GM13977 (cell line): ENCODE measurements at regions of chr12 and their contacts with region 1.

Region 1: DNA sequence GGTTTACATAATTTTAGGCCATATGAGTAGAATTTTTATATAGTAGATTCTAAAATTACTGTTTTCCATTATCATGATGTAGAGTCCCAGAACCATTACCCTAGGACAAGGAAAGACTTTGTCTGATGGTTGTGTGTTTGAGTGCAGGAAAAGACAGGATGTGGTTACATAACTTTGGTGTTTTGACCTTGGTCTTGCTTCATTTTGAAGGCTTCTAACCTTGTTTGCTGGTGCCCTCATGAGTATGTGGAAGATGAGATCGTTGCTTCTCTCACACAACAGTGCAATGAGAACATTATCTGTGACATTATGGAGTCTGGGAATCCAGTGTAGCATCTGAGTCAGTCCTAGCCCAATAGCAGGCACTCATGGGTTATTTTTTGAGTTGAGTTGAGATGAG is 106.2 kb downstream of the IGF1 start:
- DNase-seq: no peak
- CTCF ChIP-seq: no peak

Region 2: GRCh38 chr12:101945369-101946231 is 428.6 kb before region 1 on chr12:
- in situ Hi-C with region 1: no loop called
- DNase-seq: no peak
- CTCF ChIP-seq: no peak

Region 3: DNA sequence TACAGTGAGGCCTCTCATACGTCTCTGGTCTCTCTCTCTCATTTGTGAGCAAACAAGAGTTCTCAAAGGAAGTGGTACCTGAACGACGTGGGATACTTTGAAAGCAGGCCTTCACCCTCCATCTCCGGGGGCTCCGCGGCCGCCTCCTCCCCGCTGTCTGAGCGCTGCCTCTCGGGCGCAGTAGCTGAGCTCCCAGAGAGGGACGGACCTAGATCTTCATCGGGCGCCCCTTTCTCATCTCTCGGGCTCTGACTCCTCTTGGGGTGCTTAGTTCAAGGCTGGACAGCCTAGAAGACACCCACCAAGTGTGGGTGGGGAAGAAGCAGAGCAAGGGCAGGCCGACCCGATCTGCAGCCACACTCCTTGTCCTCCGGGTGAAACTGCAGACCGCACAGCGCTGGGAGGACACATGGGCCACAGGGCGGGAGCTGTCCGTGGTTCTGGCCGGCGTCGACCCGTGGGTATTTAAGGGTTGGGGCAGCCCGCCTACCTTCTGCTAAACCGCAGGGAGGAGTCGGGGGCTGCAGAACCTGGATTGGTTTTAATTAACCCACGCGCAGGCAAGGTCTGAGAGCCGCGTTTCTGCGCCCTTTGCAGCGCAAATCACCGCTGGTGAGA is 450.1 kb after region 1 on chr12:
- in situ Hi-C with region 1: no loop called
- DNase-seq: peak; percentile 12
- CTCF ChIP-seq: no peak

Region 4: DNA sequence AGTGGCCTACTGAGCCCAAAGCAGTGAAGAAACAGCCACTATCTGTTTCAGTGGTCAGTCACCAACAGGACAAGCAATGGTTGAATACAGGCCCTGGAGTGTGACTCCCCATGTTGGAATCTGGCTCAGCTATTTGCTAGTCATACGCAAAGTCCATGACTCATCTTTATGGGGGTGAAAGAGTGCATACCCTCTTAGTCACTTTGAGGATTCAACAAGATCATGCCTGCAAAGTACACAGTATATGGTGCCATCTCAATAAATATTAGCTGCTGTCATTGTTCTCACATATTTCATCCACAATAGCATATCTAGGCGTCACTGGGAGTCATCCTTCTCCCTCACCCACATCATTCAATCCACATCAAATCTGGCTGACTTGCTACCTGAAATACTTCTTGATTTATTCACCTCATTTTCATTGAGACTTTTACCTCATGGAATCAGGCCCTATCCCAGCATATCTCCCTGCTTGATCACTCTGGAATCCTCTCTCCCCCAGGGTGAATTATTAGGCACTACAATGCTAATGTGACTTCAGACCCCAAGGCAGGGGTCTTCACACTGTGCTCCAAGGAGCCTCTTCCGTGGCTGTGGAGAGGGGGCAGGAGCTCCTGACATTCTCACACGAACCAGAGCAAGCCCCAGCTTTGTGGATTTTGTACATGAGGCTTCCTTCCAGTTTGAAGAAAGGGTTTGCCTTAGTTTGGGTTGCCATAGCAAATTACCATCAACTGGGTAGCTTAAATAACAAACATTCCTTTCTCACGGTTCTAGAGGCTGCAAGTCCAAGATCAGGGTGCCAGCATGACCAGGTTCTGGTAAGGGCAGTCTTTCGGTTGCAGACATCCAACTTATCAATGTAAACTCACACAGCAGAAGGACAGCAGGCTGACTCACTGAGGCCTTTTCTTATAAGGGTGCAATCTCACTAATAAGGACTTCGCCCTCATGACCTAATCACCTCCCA is 1186.7 kb after region 1 on chr12:
- in situ Hi-C with region 1: loop called (anchors 25 kb)
- DNase-seq: no peak
- CTCF ChIP-seq: no peak